ENCODE measurements at regions of chr9 and their contacts with region 1.

Region 1: DNA sequence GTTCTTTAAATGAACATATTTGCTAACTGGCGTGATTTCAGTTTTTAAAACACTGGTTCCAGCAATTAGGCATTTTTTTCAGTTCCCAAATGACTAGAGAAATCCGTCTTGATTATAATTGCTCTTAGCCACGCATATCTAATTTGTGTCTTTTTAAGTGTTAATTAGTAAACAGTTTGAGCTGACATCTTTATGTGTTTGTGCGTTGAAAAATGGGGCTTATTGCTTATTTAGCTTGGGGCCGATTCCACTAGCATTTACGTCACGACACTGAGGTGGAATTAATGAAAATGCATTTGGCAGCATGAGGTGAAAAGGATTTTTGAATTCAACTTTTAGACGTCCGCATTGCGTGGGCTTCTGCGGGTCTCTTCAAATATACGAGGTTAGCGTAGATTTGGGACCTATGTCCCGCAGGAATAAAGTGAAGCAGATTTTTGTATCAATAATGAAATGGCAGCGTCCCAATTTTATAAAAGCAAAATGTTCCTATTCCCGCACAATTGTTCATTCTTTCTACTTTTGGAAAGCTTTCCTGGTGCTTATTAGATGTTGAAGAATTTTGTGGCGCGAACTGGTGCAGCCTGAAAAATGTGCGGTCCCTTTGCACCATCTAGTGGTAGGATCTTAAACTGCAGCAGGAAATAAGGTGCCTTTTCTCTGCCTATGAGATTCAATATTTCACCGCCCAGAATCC is 122.7 kb upstream of the LMX1B start:
- DNase-seq: peak; percentile 36
- H3K4me3 Mint-ChIP-seq: no peak overlapping the region
- H3K27ac Mint-ChIP-seq: no peak overlapping the region
- H3K4me1 Mint-ChIP-seq: peaks cover 4% of the 10 kb centered on the region
- H3K27me3 Mint-ChIP-seq: peaks cover 54% of the 10 kb centered on the region

Region 2: GRCh38 chr9:125407974-125408900 is 1082.8 kb before region 1 on chr9:
- intact Hi-C with region 1: loop called (anchors 5 kb)
- DNase-seq: peak; percentile 59
- H3K4me3 Mint-ChIP-seq: peak overlapping the region; percentile 77
- H3K27ac Mint-ChIP-seq: no peak overlapping the region
- H3K4me1 Mint-ChIP-seq: peaks cover 11% of the 10 kb centered on the region
- H3K27me3 Mint-ChIP-seq: peaks cover 15% of the 10 kb centered on the region

Region 3: GRCh38 chr9:126228781-126229444 is 262.1 kb before region 1 on chr9:
- intact Hi-C with region 1: loop called (anchors 2 kb)
- DNase-seq: peak; percentile 40
- H3K4me3 Mint-ChIP-seq: no peak overlapping the region
- H3K27ac Mint-ChIP-seq: no peak overlapping the region
- H3K4me1 Mint-ChIP-seq: no peaks in the 10 kb centered on the region
- H3K27me3 Mint-ChIP-seq: peaks cover 23% of the 10 kb centered on the region

Region 4: DNA sequence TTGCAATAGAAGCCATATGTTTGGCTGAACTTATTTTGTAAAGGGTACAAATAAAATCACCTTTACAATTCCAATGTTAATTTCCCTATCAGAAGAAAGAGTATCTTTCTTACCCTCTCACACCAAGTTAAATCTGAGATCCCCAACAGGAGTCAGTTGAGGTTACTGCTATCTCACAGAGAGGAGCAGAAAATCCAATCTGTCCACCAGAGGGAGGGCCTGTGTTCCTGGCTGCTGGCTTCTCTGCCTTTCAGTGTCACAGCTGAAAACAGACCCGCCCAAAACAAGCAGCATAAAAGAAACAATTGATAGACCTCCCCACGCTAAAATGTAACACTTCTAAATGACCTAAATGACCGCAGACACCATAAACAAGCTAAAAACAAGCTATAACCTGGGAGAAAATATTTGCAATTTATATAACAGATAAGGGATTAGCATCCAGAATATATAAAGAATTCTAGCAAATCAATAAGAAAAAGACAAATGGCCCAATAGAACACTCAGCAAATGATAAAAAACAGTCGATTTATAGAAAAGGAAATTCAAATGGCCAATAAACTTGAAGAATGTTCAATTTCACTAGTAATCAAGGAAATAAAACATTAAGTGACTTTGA is 188.9 kb before region 1 on chr9:
- intact Hi-C with region 1: loop called (anchors 2 kb)
- DNase-seq: peak; percentile 26
- H3K4me3 Mint-ChIP-seq: no peak overlapping the region
- H3K27ac Mint-ChIP-seq: no peak overlapping the region
- H3K4me1 Mint-ChIP-seq: peaks cover 2% of the 10 kb centered on the region
- H3K27me3 Mint-ChIP-seq: peaks cover 14% of the 10 kb centered on the region

Region 5: GRCh38 chr9:126615175-126615814 is 124.3 kb after region 1 on chr9:
- intact Hi-C with region 1: no loop called
- DNase-seq: peak; percentile 40
- H3K4me3 Mint-ChIP-seq: no peak overlapping the region
- H3K27ac Mint-ChIP-seq: no peak overlapping the region
- H3K4me1 Mint-ChIP-seq: peaks cover 11% of the 10 kb centered on the region
- H3K27me3 Mint-ChIP-seq: peaks cover 73% of the 10 kb centered on the region